Heart left ventricle (tissue), 16 donors: ENCODE measurements at regions of chr1 and their contacts with region 1.

Region 1: GRCh38 chr1:77024500-77024899 is 157.2 kb downstream of the ST6GALNAC5 start:
- DNase-seq: no peak
- ATAC-seq: no peak
- H3K4me3 ChIP-seq: no peak overlapping the region
- H3K27ac ChIP-seq: no peak overlapping the region
- H3K4me1 ChIP-seq: no peaks in the 10 kb centered on the region
- H3K27me3 ChIP-seq: peaks cover 0 to 12% (median 0%) of the 10 kb centered on the region in 9 donors
- CTCF ChIP-seq: no peak
- POLR2A ChIP-seq: no peak

Region 2: DNA sequence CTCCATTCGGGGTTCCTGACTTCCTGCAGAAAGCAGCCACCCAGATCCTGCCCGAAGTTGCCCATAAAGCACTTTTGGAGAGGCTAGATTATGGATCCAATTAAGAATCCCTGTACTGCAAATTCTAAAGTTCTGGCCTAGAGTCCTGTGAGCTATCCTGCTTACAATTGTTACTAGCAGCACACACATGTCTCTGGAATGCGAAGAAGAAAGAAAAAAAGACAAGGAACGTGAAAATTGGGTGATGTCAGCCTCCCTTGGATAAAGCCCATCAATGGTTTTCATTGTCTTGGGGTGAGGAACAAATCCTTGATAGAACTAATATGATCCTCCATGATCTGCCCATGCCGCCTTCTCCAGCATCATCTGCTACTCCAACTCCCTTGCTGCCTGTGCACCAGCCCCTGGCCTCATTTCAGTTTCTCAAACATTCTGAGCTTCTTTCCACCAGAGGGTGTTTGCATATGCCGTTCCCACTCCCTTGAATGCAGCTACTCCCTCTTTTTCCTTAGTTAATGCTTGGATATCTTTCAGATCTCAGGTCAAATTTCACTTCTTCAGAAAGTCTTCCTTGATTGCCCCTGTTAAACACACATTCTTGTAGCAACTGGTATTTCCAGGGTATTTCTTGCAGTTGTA is 63.2 kb before region 1 on chr1:
- intact Hi-C with region 1: loop called in 1 of 10 experiments (anchors 10 kb)
- DNase-seq: no peak
- ATAC-seq: no peak
- H3K4me3 ChIP-seq: no peak overlapping the region
- H3K27ac ChIP-seq: no peak overlapping the region
- H3K4me1 ChIP-seq: no peaks in the 10 kb centered on the region
- H3K27me3 ChIP-seq: no peaks in the 10 kb centered on the region
- CTCF ChIP-seq: no peak
- POLR2A ChIP-seq: no peak